ENCODE measurements at regions of chr18 and their contacts with region 1.

Region 1: GRCh38 chr18:28735731-28736130 is 558.8 kb upstream of the CDH2 start:
- DNase-seq: no peak

Region 2: DNA sequence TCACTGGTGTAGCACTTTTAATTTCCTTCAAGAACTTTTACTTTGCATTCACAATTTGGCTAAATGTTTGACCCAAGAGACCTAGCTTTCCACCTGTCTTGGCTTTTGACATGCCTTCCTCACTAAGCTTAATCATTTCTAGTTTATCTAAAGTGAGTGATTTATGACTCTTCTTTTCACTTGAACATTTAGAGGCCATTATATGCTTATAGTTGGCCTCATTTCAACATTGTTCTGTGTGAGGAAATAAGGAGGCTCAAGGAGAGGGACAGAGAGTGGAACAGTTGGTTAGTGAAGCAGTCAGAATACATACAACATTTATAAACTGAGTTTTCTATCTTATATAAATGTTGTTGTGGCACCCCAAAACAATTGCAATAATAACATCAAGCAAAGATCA is 69.5 kb before region 1 on chr18:
- intact Hi-C with region 1: loop called in 1 of 2 experiments (anchors 10 kb)
- DNase-seq: no peak

Region 3: GRCh38 chr18:29234751-29235150 is 499.0 kb after region 1 on chr18:
- intact Hi-C with region 1: no loop called
- DNase-seq: no peak

Region 4: GRCh38 chr18:29418136-29418535 is 682.4 kb after region 1 on chr18:
- intact Hi-C with region 1: no loop called
- DNase-seq: no peak

Region 5: DNA sequence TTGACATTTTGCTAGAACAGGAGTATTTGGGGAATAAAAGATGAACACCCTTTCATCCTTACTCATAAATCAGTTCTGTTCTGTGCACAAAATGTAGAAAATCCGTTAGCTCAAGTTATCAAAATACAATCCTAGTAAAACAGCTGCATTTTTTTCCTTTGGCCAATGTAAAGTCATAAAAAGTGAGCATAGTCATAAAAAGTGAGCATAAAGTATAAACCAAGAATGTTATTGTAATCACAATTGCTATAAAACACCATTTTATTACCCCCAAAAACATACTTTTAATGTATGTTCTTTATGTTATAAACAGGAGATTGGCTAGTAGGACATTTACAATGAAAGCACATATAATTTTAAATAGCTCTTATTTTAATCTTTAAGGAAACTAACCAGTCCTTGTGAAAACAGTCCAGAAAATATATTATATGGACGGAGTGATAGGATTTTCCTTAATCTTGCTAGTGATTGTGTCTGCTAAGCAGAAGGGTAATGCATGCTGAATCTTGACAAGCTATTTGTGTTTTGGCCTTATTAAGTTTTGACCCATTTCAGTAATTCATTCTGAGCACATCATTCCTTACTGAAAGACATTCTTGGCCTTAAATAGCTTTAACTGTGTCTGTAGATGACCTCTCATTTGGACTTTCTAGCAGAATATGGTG is 1415.0 kb after region 1 on chr18:
- intact Hi-C with region 1: no loop called
- DNase-seq: no peak

Measured in posterior vena cava (tissue), 2 donors.